ENCODE measurements at regions of chr17 and their contacts with region 1.

Region 1: GRCh38 chr17:45247429-45248131 is 14.3 kb downstream of the SPATA32 start:
- DNase-seq: peak; percentile 88 to 99 (median 96)
- ATAC-seq: peak; percentile 74
- H3K4me3 ChIP-seq: peak overlapping the region; percentile 75
- H3K4me3 Mint-ChIP-seq: peak overlapping the region; percentile 93
- H3K27ac ChIP-seq: peak overlapping the region; percentile 90 to 96
- H3K27ac Mint-ChIP-seq: peak overlapping the region; percentile 100
- H3K4me1 ChIP-seq: peaks cover 87% of the 10 kb centered on the region
- H3K4me1 Mint-ChIP-seq: peaks cover 68% of the 10 kb centered on the region
- H3K27me3 ChIP-seq: no peaks in the 10 kb centered on the region
- H3K27me3 Mint-ChIP-seq: no peaks in the 10 kb centered on the region
- CTCF ChIP-seq: no peak

Region 2: DNA sequence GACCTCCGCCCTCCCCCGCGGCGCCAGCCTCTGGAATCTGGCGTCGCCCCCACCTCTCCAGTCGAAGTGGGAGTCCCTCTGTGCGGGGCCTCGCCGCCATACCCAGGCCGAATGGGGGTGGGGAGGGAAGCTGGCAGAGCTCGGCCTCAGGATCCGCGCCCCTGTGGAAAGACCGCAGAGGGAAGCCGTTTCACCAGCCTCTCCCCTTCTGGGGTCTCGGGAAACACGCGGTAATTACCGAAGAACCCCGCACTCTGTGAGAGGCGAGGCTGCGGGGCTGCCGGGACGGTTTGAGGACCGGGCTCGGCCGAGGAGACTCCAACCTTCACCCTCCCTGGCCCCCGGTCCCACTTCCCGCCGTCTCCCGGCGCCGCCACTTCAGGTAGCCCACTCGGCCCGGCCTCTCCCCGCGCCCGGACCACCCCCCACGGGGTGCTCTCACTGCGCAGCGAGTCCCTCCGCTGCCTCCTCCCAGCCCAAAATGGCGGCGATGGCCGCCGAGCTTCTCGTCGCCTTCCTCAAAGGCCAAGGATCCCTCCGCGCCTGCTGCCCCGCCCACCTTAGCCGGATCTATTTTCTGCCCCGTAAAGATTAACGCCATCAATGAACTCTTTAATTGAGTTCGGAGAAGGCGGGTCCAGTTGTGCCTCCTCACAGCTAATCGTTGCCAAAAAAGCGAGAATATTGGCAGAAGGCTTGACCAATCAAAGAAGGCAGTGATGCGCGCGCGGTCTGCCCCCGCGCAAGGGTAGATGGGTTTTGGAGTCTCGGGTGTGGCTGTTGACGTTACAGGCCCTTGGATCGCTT is 86.4 kb before region 1 on chr17:
- CTCF ChIA-PET with region 1: no interaction called
- POLR2A ChIA-PET with region 1: interaction called, 15 read pairs
- intact Hi-C with region 1: no loop called
- DNase-seq: peak; percentile 94 to 100 (median 98)
- ATAC-seq: peak; percentile 93
- H3K4me3 ChIP-seq: peak overlapping the region; percentile 97
- H3K4me3 Mint-ChIP-seq: peak overlapping the region; percentile 93
- H3K27ac ChIP-seq: peak overlapping the region; percentile 98 to 99
- H3K27ac Mint-ChIP-seq: peak overlapping the region; percentile 94
- H3K4me1 ChIP-seq: peaks cover 26% of the 10 kb centered on the region
- H3K4me1 Mint-ChIP-seq: peaks cover 37% of the 10 kb centered on the region
- H3K27me3 ChIP-seq: no peaks in the 10 kb centered on the region
- H3K27me3 Mint-ChIP-seq: no peaks in the 10 kb centered on the region
- CTCF ChIP-seq: no peak

Region 3: GRCh38 chr17:45228763-45229539 is 18.6 kb before region 1 on chr17:
- CTCF ChIA-PET with region 1: interaction called, 3 read pairs
- POLR2A ChIA-PET with region 1: interaction called, 346 read pairs
- intact Hi-C with region 1: loop called in 1 of 2 experiments (anchors 1 kb)
- DNase-seq: peak; percentile 56 to 93 (median 79)
- ATAC-seq: peak; percentile 57
- H3K4me3 ChIP-seq: peak overlapping the region; percentile 99
- H3K4me3 Mint-ChIP-seq: peak overlapping the region; percentile 87
- H3K27ac ChIP-seq: peak overlapping the region; percentile 98 to 99
- H3K27ac Mint-ChIP-seq: peak overlapping the region; percentile 100
- H3K4me1 ChIP-seq: peaks cover 98% of the 10 kb centered on the region
- H3K4me1 Mint-ChIP-seq: peaks cover 79% of the 10 kb centered on the region
- H3K27me3 ChIP-seq: no peaks in the 10 kb centered on the region
- H3K27me3 Mint-ChIP-seq: no peaks in the 10 kb centered on the region
- CTCF ChIP-seq: no peak

Region 4: GRCh38 chr17:45261577-45262515 is 14.3 kb after region 1 on chr17 and contains the start of gene SPATA32:
- CTCF ChIA-PET with region 1: interaction called, 12 read pairs
- POLR2A ChIA-PET with region 1: interaction called, 59 read pairs
- intact Hi-C with region 1: loop called in 1 of 2 experiments (anchors 1 kb)
- DNase-seq: peak; percentile 38 to 80 (median 66)
- ATAC-seq: peak; percentile 88
- H3K4me3 ChIP-seq: peak within 1 kb of the TSS; percentile 75
- H3K4me3 Mint-ChIP-seq: peak within 1 kb of the TSS; percentile 89
- H3K27ac ChIP-seq: peak within 1 kb of the TSS; percentile 65
- H3K27ac Mint-ChIP-seq: peak within 1 kb of the TSS; percentile 84
- H3K4me1 ChIP-seq: peaks cover 37% of the 10 kb centered on the region
- H3K4me1 Mint-ChIP-seq: peaks cover 40% of the 10 kb centered on the region
- H3K27me3 ChIP-seq: no peaks in the 10 kb centered on the region
- H3K27me3 Mint-ChIP-seq: no peaks in the 10 kb centered on the region
- CTCF ChIP-seq: no peak
- total RNA-seq, gene SPATA32: 0.20 to 0.27 TPM

Region 5: DNA sequence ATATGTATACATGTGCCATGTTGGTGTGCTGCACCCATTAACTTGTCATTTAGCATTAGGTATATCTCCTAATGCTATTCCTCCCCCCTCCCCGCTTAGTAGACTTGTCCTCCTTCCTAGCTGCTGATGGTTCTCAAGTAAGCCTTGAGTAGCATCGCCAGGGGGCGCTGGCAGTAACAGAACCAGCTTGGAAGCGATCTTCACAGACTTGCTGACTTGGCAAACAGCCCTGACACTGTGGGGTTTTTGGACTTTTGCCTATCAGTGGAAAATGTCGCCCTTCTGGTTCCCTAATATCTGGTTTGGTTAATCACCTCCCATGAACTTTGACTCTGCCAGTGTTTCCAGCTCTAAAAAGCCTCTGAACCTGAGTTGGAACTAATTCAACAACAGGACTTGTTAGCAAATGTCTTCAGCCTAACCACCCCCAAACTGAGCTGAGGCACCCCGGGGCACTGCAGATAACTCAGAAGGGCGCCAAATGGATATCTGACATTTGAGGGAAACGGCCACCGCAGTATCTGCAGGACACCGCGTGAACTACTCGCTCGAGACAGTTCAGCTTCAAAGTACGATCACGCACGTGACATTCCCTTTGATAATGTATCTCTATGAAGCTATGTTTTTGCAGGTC is 29.8 kb after region 1 on chr17:
- CTCF ChIA-PET with region 1: interaction called, 15 read pairs
- POLR2A ChIA-PET with region 1: interaction called, 17 read pairs
- intact Hi-C with region 1: no loop called
- DNase-seq: peak; percentile 84 to 97 (median 90)
- ATAC-seq: peak; percentile 96
- H3K4me3 ChIP-seq: no peak overlapping the region
- H3K4me3 Mint-ChIP-seq: no peak overlapping the region
- H3K27ac ChIP-seq: peak overlapping the region in 1 of 2 donors; percentile 22
- H3K27ac Mint-ChIP-seq: peak overlapping the region; percentile 51
- H3K4me1 ChIP-seq: peaks cover 6% of the 10 kb centered on the region
- H3K4me1 Mint-ChIP-seq: peaks cover 12% of the 10 kb centered on the region
- H3K27me3 ChIP-seq: no peaks in the 10 kb centered on the region
- H3K27me3 Mint-ChIP-seq: no peaks in the 10 kb centered on the region
- CTCF ChIP-seq: peak; percentile 83

Region 6: GRCh38 chr17:45317112-45317928 is 69.7 kb after region 1 on chr17:
- CTCF ChIA-PET with region 1: interaction called, 3 read pairs
- POLR2A ChIA-PET with region 1: interaction called, 52 read pairs
- intact Hi-C with region 1: loop called (anchors 2 kb)
- DNase-seq: peak; percentile 93 to 100 (median 100)
- ATAC-seq: peak; percentile 83
- H3K4me3 ChIP-seq: peak overlapping the region; percentile 88
- H3K4me3 Mint-ChIP-seq: peak overlapping the region; percentile 98
- H3K27ac ChIP-seq: peak overlapping the region; percentile 51 to 79
- H3K27ac Mint-ChIP-seq: peak overlapping the region; percentile 85
- H3K4me1 ChIP-seq: peaks cover 81% of the 10 kb centered on the region
- H3K4me1 Mint-ChIP-seq: peaks cover 88% of the 10 kb centered on the region
- H3K27me3 ChIP-seq: no peaks in the 10 kb centered on the region
- H3K27me3 Mint-ChIP-seq: no peaks in the 10 kb centered on the region
- CTCF ChIP-seq: no peak

Region 7: GRCh38 chr17:45722161-45722560 is 474.6 kb after region 1 on chr17:
- CTCF ChIA-PET with region 1: no interaction called
- POLR2A ChIA-PET with region 1: no interaction called
- intact Hi-C with region 1: no loop called
- DNase-seq: no peak
- ATAC-seq: no peak
- H3K4me3 ChIP-seq: no peak overlapping the region
- H3K4me3 Mint-ChIP-seq: no peak overlapping the region
- H3K27ac ChIP-seq: no peak overlapping the region
- H3K27ac Mint-ChIP-seq: no peak overlapping the region
- H3K4me1 ChIP-seq: no peaks in the 10 kb centered on the region
- H3K4me1 Mint-ChIP-seq: no peaks in the 10 kb centered on the region
- H3K27me3 ChIP-seq: peaks cover 12 to 13% of the 10 kb centered on the region in 2 experiments
- H3K27me3 Mint-ChIP-seq: peaks cover 72% of the 10 kb centered on the region
- CTCF ChIP-seq: no peak